Mucosa of descending colon (tissue), 3 donors: ENCODE measurements at regions of chr11 and their contacts with region 1.

Region 1: GRCh38 chr11:130861902-130862860 is 54.1 kb downstream of the SNX19 start:
- DNase-seq: peak; percentile 91 to 98 (median 91)
- ATAC-seq: peak; percentile 97
- H3K4me3 ChIP-seq: no peak overlapping the region
- H3K4me1 ChIP-seq: no peaks in the 10 kb centered on the region
- CTCF ChIP-seq: peak; percentile 99

Region 2: GRCh38 chr11:130213143-130213978 is 648.8 kb before region 1 on chr11:
- intact Hi-C with region 1: loop called (anchors 10 kb)
- DNase-seq: peak in 2 of 3 donors; percentile 77 to 84
- ATAC-seq: peak; percentile 82
- H3K4me3 ChIP-seq: no peak overlapping the region
- H3K4me1 ChIP-seq: no peaks in the 10 kb centered on the region
- CTCF ChIP-seq: peak; percentile 90

Region 3: DNA sequence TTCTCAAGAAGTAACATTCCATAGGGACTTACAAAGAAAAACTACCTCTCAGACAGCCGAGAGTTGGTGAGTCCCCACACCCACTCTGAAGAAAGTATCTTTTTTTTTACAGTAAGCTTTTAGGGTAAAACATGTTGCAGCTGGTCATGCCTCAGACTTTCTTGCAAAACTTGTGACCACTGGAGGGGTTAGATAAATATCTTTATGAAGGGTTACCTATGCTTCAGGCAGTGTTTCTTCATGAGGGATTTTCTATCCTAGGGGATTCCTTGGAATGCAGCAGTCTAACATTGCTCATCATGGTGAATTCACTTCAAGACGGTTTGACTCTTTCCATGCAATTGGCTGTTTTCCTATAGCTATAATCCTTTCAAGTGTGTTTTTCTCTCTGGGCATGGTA is 74.9 kb after region 1 on chr11:
- intact Hi-C with region 1: no loop called
- DNase-seq: no peak
- ATAC-seq: no peak
- H3K4me3 ChIP-seq: no peak overlapping the region
- H3K4me1 ChIP-seq: no peaks in the 10 kb centered on the region
- CTCF ChIP-seq: no peak